ENCODE measurements at regions of chr4 and their contacts with region 1.

Region 1: GRCh38 chr4:72701987-72702819 is 133.2 kb upstream of the ADAMTS3 start:
- DNase-seq: no peak
- ATAC-seq: no peak
- H3K4me3 ChIP-seq: peak overlapping the region in 1 of 2 donors; percentile 48
- H3K27ac ChIP-seq: no peak overlapping the region
- H3K4me1 ChIP-seq: no peaks in the 10 kb centered on the region
- H3K27me3 ChIP-seq: no peaks in the 10 kb centered on the region

Region 2: DNA sequence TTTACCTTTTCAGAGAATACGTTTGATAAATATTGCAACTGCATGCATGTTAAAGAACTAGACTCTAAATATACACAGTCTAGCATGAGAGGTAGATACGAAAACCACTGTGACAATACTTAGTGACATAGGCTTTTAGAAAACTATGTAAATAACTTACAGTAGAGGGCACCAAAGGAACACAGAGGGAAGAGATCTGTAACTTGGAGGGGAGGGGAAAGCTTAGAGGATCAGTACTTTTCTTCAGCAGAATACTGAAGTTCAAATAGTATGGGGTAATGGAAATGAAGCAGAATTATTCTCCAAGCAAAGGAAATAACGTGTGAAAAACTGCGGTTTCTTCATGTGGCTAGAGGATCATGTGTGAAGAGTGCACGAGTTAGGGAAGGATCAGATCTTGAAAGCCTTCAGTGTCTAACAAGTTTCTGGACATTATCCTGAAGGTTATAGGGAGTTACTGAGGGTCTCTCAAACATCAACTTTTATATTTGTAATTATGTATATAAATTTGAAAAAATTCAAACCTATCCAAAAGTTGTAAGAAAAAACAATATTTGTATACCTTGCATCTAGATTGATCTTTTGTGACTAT is 406.1 kb before region 1 on chr4:
- intact Hi-C with region 1: loop called (anchors 10 kb)
- DNase-seq: no peak
- ATAC-seq: peak; percentile 75
- H3K4me3 ChIP-seq: no peak overlapping the region
- H3K27ac ChIP-seq: no peak overlapping the region
- H3K4me1 ChIP-seq: no peaks in the 10 kb centered on the region
- H3K27me3 ChIP-seq: no peaks in the 10 kb centered on the region

Region 3: DNA sequence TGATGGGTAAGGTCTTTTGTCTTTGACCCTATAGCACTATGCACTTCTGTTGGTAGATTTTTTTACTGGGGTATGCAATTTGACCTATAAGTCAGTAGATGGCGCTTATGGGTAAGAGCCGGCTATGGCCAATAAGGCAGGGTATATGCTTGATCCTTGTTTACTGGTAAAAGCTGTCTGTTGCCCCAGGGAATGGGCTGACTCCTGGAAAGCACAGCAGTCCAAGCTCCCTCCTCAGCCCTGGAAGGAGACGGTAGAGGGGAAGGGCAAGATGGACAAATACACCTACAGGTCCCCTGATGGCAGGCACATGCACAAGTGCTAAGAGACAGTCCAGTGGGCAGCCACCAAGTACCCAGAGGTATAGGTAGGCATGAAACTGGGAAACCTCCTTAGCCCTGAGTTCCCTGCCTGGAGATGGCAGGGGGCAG is 196.9 kb before region 1 on chr4:
- intact Hi-C with region 1: loop called in 1 of 2 experiments (anchors 5 kb)
- DNase-seq: no peak
- ATAC-seq: peak; percentile 77
- H3K4me3 ChIP-seq: no peak overlapping the region
- H3K27ac ChIP-seq: no peak overlapping the region
- H3K4me1 ChIP-seq: no peaks in the 10 kb centered on the region
- H3K27me3 ChIP-seq: no peaks in the 10 kb centered on the region

Region 4: DNA sequence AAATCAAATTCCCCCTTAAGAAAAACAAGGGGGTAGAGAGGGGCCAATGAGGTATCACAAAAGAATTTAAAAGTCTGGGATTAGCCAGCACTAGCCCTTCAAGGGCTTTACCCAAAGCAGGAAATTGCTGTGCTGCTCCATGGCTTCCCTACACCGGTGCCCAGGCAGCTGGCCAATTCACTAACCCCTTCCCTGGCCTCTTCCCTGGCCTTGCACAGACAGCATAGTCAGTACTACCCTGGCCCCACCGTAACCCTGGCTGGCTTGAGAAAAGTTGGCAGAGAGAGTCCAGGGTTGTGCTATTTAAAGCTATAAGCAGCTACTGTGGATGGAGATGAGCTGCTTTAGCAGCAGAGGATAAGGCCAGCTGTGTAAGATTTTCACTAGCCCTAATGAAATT is 176.3 kb before region 1 on chr4:
- intact Hi-C with region 1: no loop called
- DNase-seq: peak; percentile 77 to 86
- ATAC-seq: peak; percentile 64
- H3K4me3 ChIP-seq: no peak overlapping the region
- H3K27ac ChIP-seq: no peak overlapping the region
- H3K4me1 ChIP-seq: peaks cover 0 to 3% of the 10 kb centered on the region in 2 donors
- H3K27me3 ChIP-seq: no peaks in the 10 kb centered on the region

Region 5: DNA sequence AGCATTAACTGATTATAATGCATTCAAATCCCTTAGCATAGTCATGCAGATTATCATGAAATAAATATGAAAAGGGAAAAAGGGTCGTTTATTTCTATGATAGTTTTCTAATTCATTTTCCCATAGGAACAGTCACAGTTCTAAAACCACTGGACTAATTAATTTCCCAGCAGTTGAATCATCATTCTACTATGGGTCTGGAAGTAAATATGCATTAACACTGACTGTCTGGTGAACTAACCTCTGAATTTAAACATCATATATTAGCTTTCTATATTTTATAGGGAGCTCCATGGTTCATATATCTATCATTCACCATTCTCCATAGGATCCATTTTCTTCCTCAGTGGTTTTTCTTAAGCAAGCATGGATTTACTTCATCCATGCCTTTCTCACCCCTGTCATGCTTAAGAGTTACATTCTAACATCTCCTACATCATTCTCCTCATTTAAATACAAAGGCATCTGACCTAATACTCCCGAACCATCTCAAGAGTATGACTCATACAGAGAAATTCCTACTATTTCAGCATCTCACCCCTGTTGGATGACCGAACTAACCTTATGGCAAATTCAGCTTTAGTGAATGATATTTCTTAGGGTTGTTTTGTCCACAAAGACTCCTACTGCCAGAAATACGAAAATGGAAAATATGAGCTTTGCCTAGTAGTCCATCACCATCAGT is 65.6 kb after region 1 on chr4:
- intact Hi-C with region 1: loop called in 1 of 2 experiments (anchors 10 kb)
- DNase-seq: no peak
- ATAC-seq: peak; percentile 83
- H3K4me3 ChIP-seq: no peak overlapping the region
- H3K27ac ChIP-seq: peak overlapping the region in 1 of 2 donors; percentile 58
- H3K4me1 ChIP-seq: no peaks in the 10 kb centered on the region
- H3K27me3 ChIP-seq: no peaks in the 10 kb centered on the region

Region 6: DNA sequence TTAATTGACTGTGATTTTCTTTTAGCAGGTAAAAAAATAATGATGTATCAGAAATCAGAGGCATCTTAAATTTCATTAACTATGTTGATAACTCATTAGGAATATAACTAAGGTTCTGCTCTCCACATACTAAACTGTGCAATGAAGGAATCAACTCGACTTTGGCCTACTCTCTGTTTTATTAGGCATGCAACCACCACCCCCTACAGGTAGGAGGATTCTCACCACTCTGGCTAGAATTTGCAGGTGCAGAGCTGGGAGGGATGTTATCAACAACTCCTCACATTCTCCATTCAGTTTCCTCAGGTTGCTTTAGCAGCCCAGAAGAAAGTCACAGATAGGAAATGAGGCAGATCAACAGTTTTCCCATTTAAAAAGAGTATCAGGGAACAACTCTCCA is 207.3 kb after region 1 on chr4:
- intact Hi-C with region 1: loop called (anchors 5 to 10 kb)
- DNase-seq: no peak
- ATAC-seq: peak; percentile 67
- H3K4me3 ChIP-seq: no peak overlapping the region
- H3K27ac ChIP-seq: no peak overlapping the region
- H3K4me1 ChIP-seq: no peaks in the 10 kb centered on the region
- H3K27me3 ChIP-seq: no peaks in the 10 kb centered on the region

Region 7: GRCh38 chr4:72919937-72920336 is 217.7 kb after region 1 on chr4:
- intact Hi-C with region 1: loop called in 1 of 2 experiments (anchors 10 kb)
- DNase-seq: no peak
- ATAC-seq: no peak
- H3K4me3 ChIP-seq: no peak overlapping the region
- H3K27ac ChIP-seq: no peak overlapping the region
- H3K4me1 ChIP-seq: no peaks in the 10 kb centered on the region
- H3K27me3 ChIP-seq: no peaks in the 10 kb centered on the region